ENCODE measurements at regions of chrX and their contacts with region 1.

Region 1: DNA sequence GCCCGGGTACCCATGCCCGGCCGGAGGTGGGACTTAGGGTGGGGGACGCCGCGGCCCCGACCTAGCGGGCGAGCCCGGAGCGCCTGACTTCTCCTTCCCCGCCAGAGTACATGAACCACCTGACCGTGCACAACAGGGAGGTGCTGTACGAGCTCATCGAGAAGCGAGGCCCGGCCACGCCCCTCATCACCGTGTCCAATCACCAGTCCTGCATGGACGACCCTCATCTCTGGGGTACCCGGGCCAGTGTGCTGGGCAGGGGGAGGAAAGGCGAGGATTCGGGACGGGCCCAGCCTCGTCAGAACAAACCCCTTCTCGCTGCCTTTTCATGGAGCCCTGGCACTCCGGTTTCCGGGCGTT is 622 bp downstream of the TAFAZZIN start:
- DNase-seq: no peak
- ATAC-seq: peak; percentile 71

Region 2: GRCh38 chrX:154398725-154399599 is 13.0 kb before region 1 on chrX:
- intact Hi-C with region 1: loop called (anchors 1 kb)
- DNase-seq: peak; percentile 94
- ATAC-seq: peak; percentile 55

Region 3: GRCh38 chrX:154431341-154431740 is 19.4 kb after region 1 on chrX:
- intact Hi-C with region 1: loop called (anchors 2 kb)
- DNase-seq: no peak
- ATAC-seq: no peak